Stomach (tissue), 19 donors: ENCODE measurements at regions of chr4 and their contacts with region 1.

Region 1: DNA sequence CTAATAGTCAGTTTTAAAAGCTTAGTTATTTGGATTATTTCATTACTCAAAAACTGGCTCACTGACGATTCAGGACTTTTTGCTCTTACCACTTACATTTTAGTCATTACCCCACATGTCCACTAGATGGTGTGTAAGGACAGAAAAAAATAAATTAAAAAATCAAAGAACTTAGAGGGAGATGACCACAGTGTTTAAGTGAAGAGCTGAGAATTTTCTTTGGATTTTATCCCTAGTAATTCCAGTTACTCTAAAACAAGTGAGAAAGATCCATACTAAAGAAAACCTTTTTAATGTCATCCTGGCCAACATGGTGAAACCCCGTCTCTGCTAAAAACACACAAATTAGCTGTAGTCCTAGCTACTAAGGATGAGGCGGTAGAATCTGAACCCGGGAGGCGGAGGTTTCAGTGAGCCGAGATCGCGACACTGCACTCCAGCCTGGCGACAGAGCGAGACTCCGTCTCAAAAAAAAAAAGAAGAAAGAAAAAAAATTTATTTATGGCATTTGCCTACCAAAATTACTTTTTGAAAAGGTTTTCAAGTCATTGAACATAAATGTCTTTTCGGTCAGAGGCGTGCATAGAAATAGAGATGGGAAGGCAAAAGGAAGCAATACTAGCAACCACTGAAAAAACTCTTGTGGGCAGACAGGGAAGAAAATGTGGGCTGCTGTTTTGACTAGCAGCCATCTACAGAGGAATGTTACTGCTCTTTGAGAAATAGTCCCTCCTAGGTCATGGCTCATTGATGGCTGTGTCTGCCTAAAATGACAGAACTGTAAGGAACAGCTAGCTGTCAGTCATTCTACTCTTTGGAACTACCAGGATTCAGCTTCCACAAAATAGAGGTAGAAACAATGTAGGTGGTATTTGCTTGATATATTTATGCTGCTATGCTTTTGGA is 26.6 kb upstream of the TMPRSS11B start:
- DNase-seq: peak in 1 of 2 donors; percentile 71
- H3K4me3 ChIP-seq: peak overlapping the region in 1 of 4 donors; percentile 11
- H3K27ac ChIP-seq: no peak overlapping the region
- H3K4me1 ChIP-seq: peaks cover 0 to 5% (median 0%) of the 10 kb centered on the region in 4 donors
- H3K27me3 ChIP-seq: no peaks in the 10 kb centered on the region
- CTCF ChIP-seq: peak in 5 of 7 experiments; percentile 57 to 80 (median 71)
- EP300 ChIP-seq: no peak
- POLR2A ChIP-seq: no peak

Region 2: DNA sequence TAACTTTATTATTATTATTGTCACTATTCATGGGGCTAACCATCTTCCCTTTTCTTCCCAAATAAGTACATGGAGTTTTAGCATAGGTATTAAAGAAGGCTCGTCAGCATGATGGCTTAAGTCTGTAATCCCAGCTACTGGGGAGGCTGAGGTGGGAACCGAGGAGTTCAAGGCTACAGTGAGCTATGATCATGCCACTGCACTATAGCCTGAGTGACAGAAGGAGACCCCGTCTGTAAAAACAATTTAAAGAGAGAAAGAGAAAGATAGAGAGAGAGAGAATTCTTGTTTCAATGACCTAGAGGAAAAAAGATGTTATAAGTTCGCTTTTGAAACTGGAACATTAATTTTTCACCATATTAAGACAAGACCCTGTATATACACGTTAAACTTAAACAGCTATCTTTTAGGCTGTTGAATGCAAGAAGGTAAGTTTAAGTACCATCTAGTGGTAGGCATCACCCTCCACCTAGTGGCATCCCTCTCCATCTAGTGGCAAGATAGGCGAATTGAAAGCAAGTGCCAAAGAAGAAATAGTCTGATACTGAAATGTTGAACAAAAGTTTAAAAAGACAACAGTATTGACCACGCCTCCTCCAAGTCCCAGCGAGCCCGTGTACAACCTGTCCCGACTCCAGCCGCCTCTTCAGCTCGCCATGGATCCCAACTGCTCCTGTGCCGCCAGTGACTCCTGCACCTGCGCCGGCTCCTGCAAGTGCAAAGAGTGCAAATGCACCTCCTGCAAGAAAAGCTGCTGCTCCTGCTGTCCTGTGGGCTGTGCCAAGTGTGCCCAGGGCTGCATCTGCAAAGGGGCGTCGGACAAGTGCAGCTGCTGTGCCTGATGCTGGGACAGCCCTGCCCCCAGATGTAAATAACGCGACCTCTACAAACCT is 103.8 kb after region 1 on chr4:
- intact Hi-C with region 1: loop called (anchors 5 kb)
- DNase-seq: peak in 1 of 2 donors; percentile 75
- H3K4me3 ChIP-seq: peak overlapping the region in 3 of 4 donors; percentile 4 to 40 (median 21)
- H3K27ac ChIP-seq: no peak overlapping the region
- H3K4me1 ChIP-seq: peaks cover 0 to 14% (median 7%) of the 10 kb centered on the region in 4 donors
- H3K27me3 ChIP-seq: peaks cover 0 to 30% (median 4%) of the 10 kb centered on the region in 3 donors
- CTCF ChIP-seq: peak in 5 of 7 experiments; percentile 69 to 85 (median 80)
- EP300 ChIP-seq: no peak
- POLR2A ChIP-seq: no peak

Region 3: DNA sequence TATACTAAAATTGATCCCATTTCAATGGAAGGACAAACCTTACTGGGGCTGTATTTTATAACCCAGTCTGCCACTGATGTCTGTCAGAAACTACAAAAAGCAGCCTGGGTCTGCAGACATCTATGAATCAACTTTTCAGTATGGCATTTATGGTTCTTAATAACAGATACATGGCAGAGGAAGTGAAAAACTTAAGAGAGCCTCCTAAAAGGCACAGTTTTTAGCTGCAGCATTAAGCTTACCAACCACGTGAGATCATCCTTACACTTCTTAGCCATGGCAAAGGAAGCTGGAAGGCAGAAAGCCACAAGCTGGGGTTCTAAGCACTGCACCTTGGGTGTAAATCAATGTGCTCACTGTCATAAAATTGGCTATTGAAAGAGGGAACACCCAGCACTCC is 320.6 kb after region 1 on chr4:
- intact Hi-C with region 1: no loop called
- DNase-seq: no peak
- H3K4me3 ChIP-seq: no peak overlapping the region
- H3K27ac ChIP-seq: no peak overlapping the region
- H3K4me1 ChIP-seq: no peaks in the 10 kb centered on the region
- H3K27me3 ChIP-seq: no peaks in the 10 kb centered on the region
- CTCF ChIP-seq: no peak
- EP300 ChIP-seq: no peak
- POLR2A ChIP-seq: no peak